ENCODE measurements at regions of chr7 and their contacts with region 1.

Region 1: GRCh38 chr7:155738652-155739537 is 73.4 kb downstream of the SHH start:
- DNase-seq: peak; percentile 42
- ATAC-seq: peak; percentile 64
- H3K4me3 Mint-ChIP-seq: no peak overlapping the region
- H3K27ac Mint-ChIP-seq: no peak overlapping the region
- H3K4me1 Mint-ChIP-seq: peaks cover 58% of the 10 kb centered on the region
- H3K27me3 Mint-ChIP-seq: no peaks in the 10 kb centered on the region
- CTCF ChIP-seq: peak; percentile 30

Region 2: GRCh38 chr7:155752756-155753445 is 14.0 kb after region 1 on chr7:
- CTCF ChIA-PET with region 1: no interaction called
- POLR2A ChIA-PET with region 1: no interaction called
- intact Hi-C with region 1: loop called (anchors 1 kb)
- DNase-seq: no peak
- ATAC-seq: peak; percentile 49
- H3K4me3 Mint-ChIP-seq: peak overlapping the region; percentile 42
- H3K27ac Mint-ChIP-seq: peak overlapping the region; percentile 76
- H3K4me1 Mint-ChIP-seq: peaks cover 81% of the 10 kb centered on the region
- H3K27me3 Mint-ChIP-seq: no peaks in the 10 kb centered on the region
- CTCF ChIP-seq: no peak

Region 3: DNA sequence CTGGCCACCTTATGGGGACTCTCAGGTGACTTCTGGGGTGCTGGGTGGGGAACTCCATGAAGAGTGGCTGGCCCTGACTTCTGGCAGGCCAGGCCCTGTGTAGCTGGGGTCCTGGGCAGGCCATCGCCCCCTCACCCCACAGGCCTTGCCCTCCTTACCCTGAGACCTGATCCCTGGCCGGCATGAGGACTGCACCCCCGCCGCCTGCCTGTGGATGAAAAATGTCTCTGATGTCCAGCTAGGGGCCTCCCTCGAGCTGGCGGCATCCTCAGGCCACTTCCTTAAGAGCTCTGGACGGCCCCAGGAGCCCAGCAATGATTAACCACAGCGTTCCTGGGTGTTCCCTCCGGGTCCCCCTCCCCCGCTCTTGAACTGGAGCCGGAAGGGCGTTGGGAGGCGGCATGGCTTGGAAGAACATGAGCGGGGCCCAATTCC is 105.1 kb after region 1 on chr7:
- CTCF ChIA-PET with region 1: no interaction called
- POLR2A ChIA-PET with region 1: no interaction called
- intact Hi-C with region 1: no loop called
- DNase-seq: no peak
- ATAC-seq: no peak
- H3K4me3 Mint-ChIP-seq: no peak overlapping the region
- H3K27ac Mint-ChIP-seq: no peak overlapping the region
- H3K4me1 Mint-ChIP-seq: no peaks in the 10 kb centered on the region
- H3K27me3 Mint-ChIP-seq: peaks cover 4% of the 10 kb centered on the region
- CTCF ChIP-seq: no peak

Measured in activated B cell treated with CpG ODN at 0.5 μM for 24 hours (primary cell).